ENCODE measurements at regions of chr10 and their contacts with region 1.

Region 1: GRCh38 chr10:11024596-11024995 is 6.9 kb downstream of the CELF2 start:
- DNase-seq: no peak
- H3K4me3 ChIP-seq: no peak overlapping the region
- H3K27ac ChIP-seq: no peak overlapping the region
- H3K4me1 ChIP-seq: peaks cover 0 to 13% (median 7%) of the 10 kb centered on the region in 4 donors
- H3K27me3 ChIP-seq: no peaks in the 10 kb centered on the region
- CTCF ChIP-seq: no peak
- EP300 ChIP-seq: no peak
- POLR2A ChIP-seq: no peak

Region 2: GRCh38 chr10:11086177-11086865 is 61.7 kb after region 1 on chr10:
- intact Hi-C with region 1: no loop called
- DNase-seq: peak; percentile 80
- H3K4me3 ChIP-seq: no peak overlapping the region
- H3K27ac ChIP-seq: peak overlapping the region in 3 of 4 donors; percentile 1 to 60 (median 60)
- H3K4me1 ChIP-seq: peaks cover 0 to 30% (median 21%) of the 10 kb centered on the region in 4 donors
- H3K27me3 ChIP-seq: no peaks in the 10 kb centered on the region
- CTCF ChIP-seq: no peak
- EP300 ChIP-seq: peak in 1 of 4 donors; percentile 33
- POLR2A ChIP-seq: no peak

Region 3: DNA sequence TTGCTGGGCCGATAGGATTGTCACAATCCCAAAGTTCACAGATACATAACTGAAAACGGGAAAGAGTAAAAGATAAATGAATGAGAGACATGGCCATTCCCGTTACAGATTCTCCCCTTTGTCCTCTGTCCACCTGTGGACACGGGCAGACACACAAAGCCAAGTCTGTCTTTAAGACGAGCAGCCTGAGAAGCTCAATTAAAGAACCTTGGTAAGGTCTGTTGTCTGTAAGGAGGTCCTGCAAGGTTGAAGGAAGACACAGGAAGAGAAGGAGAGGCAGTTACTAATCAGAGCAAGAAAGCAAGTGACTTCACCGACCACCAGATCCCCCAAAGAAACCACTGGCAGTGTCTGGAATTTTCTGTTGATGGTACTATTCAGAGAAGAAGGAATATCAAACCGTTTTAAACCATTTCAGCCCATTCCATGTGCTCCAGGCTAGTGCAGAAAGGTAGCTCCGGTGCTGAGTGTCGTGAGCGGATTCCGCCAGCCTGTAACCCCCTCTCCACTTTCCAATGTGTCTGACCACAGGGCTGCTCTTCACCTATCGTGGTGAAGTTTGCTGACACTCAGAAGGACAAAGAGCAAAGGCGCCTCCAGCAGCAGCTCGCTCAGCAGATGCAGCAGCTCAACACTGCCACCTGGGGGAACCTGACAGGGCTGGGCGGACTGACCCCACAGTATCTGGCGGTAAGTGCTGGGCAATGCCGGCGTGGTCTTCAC is 245.7 kb after region 1 on chr10:
- intact Hi-C with region 1: loop called (anchors 5 kb)
- DNase-seq: peak; percentile 84
- H3K4me3 ChIP-seq: no peak overlapping the region
- H3K27ac ChIP-seq: no peak overlapping the region
- H3K4me1 ChIP-seq: peaks cover 0 to 13% (median 8%) of the 10 kb centered on the region in 4 donors
- H3K27me3 ChIP-seq: no peaks in the 10 kb centered on the region
- CTCF ChIP-seq: peak; percentile 49 to 90 (median 80)
- EP300 ChIP-seq: no peak
- POLR2A ChIP-seq: no peak